ENCODE measurements at regions of chr5 and their contacts with region 1.

Region 1: DNA sequence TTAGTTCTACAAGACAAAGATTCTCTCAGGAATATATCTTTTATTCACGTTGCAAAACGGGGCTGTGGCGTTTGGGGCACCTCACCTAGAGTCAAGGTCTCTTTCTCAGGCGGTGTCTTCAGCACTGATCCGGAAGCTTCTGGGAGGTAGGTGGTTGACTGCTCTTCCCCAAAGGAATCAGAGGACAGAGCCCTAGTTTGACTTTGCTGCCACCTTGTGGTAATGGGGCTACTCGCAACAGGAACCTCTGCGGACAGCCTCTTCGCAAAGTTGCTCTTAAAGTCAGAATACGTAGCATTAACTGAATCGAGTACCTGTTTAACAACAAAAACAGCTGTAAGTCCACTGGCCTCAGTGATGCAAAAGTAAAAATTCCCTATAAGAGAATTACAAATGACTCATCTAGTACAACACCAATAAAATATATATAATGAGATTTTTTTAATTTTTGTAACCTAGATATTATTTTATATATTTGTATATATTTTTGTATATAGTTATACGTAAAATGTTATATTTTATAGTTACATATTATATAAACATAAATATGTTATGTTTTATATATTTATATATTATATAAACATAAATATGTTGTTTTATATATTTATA is 13.3 kb upstream of the GPX8 start:
- DNase-seq: peak; percentile 77 to 83 (median 80)
- H3K4me3 ChIP-seq: no peak overlapping the region
- H3K4me3 Mint-ChIP-seq: peak overlapping the region in 7 of 8 donors; percentile 11 to 70 (median 48)
- H3K27ac ChIP-seq: no peak overlapping the region
- H3K27ac Mint-ChIP-seq: no peak overlapping the region
- H3K4me1 ChIP-seq: peaks cover 18% of the 10 kb centered on the region
- H3K4me1 Mint-ChIP-seq: peaks cover 12 to 25% (median 15%) of the 10 kb centered on the region in 4 donors
- H3K27me3 ChIP-seq: no peaks in the 10 kb centered on the region
- H3K27me3 Mint-ChIP-seq: peaks cover 0 to 3% of the 10 kb centered on the region in 2 donors

Region 2: DNA sequence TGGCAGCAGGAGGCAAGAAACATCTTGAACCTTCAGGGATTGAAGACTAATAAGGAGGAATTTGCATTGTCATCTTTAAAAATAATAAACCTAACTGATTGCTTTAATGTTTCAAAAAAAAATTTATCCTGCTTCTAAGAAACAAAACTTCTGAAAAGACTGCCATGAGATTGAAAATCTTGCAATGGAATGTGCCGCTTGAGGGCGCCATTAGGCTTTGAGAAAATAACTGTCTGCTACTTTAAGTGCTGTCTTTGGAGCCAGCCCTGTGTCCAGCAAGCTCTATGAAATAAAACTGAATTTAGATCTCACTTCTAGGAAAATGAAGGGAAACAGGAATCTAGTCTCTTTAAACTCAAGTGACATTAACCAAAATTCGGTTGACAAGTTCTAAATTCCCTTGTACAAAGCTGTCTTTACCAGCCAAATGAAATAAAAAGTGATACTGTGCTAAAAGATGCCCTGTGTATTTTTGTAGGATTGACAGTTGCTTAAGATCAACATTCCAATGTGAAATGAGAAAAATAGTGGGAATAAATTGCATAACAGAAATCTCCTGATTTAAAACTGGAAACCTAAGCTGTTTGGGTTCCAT is 240.6 kb before region 1 on chr5:
- CTCF ChIA-PET with region 1: interaction called, 58 read pairs
- POLR2A ChIA-PET with region 1: interaction called, 3 read pairs
- intact Hi-C with region 1: loop called (anchors 1 kb)
- DNase-seq: peak; percentile 51 to 62 (median 57)
- H3K4me3 ChIP-seq: no peak overlapping the region
- H3K4me3 Mint-ChIP-seq: no peak overlapping the region
- H3K27ac ChIP-seq: no peak overlapping the region
- H3K27ac Mint-ChIP-seq: no peak overlapping the region
- H3K4me1 ChIP-seq: peaks cover 9% of the 10 kb centered on the region
- H3K4me1 Mint-ChIP-seq: peaks cover 4 to 9% (median 8%) of the 10 kb centered on the region in 4 donors
- H3K27me3 ChIP-seq: no peaks in the 10 kb centered on the region
- H3K27me3 Mint-ChIP-seq: peaks cover 5 to 8% of the 10 kb centered on the region in 2 donors

Region 3: DNA sequence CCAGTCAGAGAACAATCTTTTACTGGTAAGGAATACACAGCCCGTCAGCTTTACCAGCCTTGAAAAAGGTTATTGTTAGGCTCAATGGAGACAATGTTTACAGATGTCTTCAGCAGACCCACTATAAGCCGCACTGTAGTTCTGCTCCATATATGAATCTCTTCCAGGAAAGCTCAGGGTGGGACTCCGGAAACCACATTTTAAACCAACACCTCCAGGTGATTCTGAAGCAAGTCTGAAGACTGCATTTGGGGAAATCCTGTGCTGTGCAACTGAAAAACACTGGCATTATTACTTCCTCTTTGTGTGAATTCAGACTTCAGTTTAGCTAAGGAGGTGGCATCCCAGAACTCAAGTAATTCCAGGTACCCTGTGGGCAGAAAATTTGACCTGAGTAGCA is 119.1 kb before region 1 on chr5:
- CTCF ChIA-PET with region 1: interaction called, 3 read pairs
- POLR2A ChIA-PET with region 1: no interaction called
- intact Hi-C with region 1: loop called (anchors 2 kb)
- DNase-seq: peak; percentile 11 to 66 (median 24)
- H3K4me3 ChIP-seq: peak overlapping the region in 1 of 2 donors; percentile 4
- H3K4me3 Mint-ChIP-seq: peak overlapping the region; percentile 48 to 89 (median 72)
- H3K27ac ChIP-seq: peak overlapping the region; percentile 36
- H3K27ac Mint-ChIP-seq: peak overlapping the region; percentile 18 to 86 (median 77)
- H3K4me1 ChIP-seq: peaks cover 77% of the 10 kb centered on the region
- H3K4me1 Mint-ChIP-seq: peaks cover 51 to 95% (median 71%) of the 10 kb centered on the region in 4 donors
- H3K27me3 ChIP-seq: no peaks in the 10 kb centered on the region
- H3K27me3 Mint-ChIP-seq: no peaks in the 10 kb centered on the region

Region 4: GRCh38 chr5:55102348-55102747 is 44.3 kb before region 1 on chr5 and contains the start of gene GZMA:
- CTCF ChIA-PET with region 1: interaction called, 7 read pairs
- POLR2A ChIA-PET with region 1: interaction called, 4 read pairs
- intact Hi-C with region 1: loop called (anchors 1 kb)
- DNase-seq: peak; percentile 66 to 81 (median 76)
- H3K4me3 ChIP-seq: peak within 1 kb of the TSS; percentile 34 to 56
- H3K4me3 Mint-ChIP-seq: peak within 1 kb of the TSS; percentile 83 to 96 (median 90)
- H3K27ac ChIP-seq: peak within 1 kb of the TSS; percentile 32
- H3K27ac Mint-ChIP-seq: peak within 1 kb of the TSS; percentile 78 to 96 (median 91)
- H3K4me1 ChIP-seq: peaks cover 61% of the 10 kb centered on the region
- H3K4me1 Mint-ChIP-seq: peaks cover 58 to 89% (median 75%) of the 10 kb centered on the region in 4 donors
- H3K27me3 ChIP-seq: no peaks in the 10 kb centered on the region
- H3K27me3 Mint-ChIP-seq: no peaks in the 10 kb centered on the region
- total RNA-seq, gene GZMA: 25.0 to 28.2 TPM

Region 5: GRCh38 chr5:55159763-55160492 is 13.3 kb after region 1 on chr5 and contains the start of gene GPX8:
- CTCF ChIA-PET with region 1: interaction called, 12 read pairs
- POLR2A ChIA-PET with region 1: no interaction called
- intact Hi-C with region 1: loop called (anchors 1 kb)
- DNase-seq: peak; percentile 45 to 56 (median 51)
- H3K4me3 ChIP-seq: no peak within 1 kb of the TSS
- H3K4me3 Mint-ChIP-seq: no peak within 1 kb of the TSS
- H3K27ac ChIP-seq: no peak within 1 kb of the TSS
- H3K27ac Mint-ChIP-seq: no peak within 1 kb of the TSS
- H3K4me1 ChIP-seq: no peaks in the 10 kb centered on the region
- H3K4me1 Mint-ChIP-seq: no peaks in the 10 kb centered on the region
- H3K27me3 ChIP-seq: no peaks in the 10 kb centered on the region
- H3K27me3 Mint-ChIP-seq: peaks cover 14 to 24% of the 10 kb centered on the region in 2 donors
- total RNA-seq, gene GPX8: not detected

Measured in CD4-positive, alpha-beta memory T cell (primary cell).